ENCODE measurements at regions of chr16 and their contacts with region 1.

Region 1: DNA sequence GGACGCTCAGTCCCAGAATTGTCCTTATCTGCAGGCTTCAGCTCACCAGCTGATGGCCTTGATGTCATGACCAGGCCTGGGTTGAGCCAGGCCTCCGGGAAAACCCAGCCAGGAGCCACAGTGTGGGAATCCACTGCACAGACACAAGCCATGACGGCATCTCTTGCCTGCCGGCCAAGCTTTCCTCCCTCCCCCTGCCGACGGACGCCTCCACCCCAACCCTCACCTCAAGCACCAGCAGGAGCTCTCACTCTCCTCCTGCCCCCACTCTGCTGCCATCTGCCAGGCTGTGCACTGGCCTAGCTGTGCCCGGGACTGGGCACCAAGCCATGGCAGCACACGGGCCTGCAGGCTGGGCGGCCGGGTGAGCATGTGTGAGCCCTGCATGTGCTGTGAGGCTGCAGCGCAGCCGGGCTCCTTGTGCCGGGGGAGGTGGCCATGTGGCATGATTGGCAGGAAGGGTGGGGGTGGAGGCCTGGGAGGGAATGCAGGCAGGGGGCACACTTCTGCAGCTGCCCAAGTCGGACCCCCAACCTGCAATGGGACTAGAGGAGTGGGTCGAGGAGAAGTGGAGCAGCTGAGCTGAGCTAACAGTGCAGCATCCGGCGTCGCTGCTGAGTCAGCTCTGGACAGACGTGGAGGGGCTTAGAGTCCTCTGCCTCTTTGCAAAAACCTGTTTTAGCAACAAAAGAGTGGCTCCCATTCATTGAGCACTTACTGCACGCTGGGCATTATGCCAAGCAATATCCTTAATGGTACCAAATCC is 268.5 kb downstream of the CBLN1 start:
- DNase-seq: peak; percentile 24
- H3K4me3 ChIP-seq: no peak overlapping the region
- H3K27ac ChIP-seq: peak overlapping the region in 3 of 4 donors; percentile 7 to 51 (median 13)
- H3K4me1 ChIP-seq: no peaks in the 10 kb centered on the region
- H3K27me3 ChIP-seq: no peaks in the 10 kb centered on the region
- CTCF ChIP-seq: no peak
- EP300 ChIP-seq: no peak
- POLR2A ChIP-seq: no peak

Region 2: DNA sequence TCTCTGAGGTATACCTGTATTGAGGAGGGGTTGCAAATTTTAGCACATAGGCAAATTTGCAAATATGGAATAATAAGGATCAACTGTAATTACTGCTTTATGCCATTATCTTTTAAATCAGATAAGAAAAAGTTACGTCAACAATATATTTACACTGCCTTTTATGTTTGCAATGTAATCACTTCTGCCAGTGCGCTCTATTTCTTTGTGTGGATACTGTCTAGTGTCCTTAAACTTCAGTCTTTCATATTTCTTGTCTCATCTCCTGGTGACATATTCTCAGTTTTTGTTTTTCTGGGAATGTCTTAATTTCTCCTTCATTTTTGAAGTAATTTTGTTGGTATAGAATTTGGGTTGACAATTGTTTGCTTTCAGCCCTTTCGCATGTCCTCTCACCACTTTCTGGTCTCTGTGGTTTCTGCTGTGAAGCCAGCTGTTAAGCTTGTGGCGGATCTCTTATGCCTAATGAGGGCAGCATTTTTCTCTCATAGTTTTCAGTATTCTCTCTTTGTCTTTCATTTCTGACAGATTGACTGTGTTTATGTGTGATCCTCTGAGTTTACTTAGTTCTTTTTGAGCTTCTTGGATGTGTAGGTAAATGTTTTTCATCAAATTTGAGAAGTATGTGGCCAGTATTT is 728.3 kb before region 1 on chr16:
- in situ Hi-C with region 1: no loop called
- intact Hi-C with region 1: no loop called
- DNase-seq: no peak
- H3K4me3 ChIP-seq: no peak overlapping the region
- H3K27ac ChIP-seq: no peak overlapping the region
- H3K4me1 ChIP-seq: peaks cover 0 to 6% (median 0%) of the 10 kb centered on the region in 4 donors
- H3K27me3 ChIP-seq: no peaks in the 10 kb centered on the region
- CTCF ChIP-seq: no peak
- EP300 ChIP-seq: no peak
- POLR2A ChIP-seq: no peak

Region 3: DNA sequence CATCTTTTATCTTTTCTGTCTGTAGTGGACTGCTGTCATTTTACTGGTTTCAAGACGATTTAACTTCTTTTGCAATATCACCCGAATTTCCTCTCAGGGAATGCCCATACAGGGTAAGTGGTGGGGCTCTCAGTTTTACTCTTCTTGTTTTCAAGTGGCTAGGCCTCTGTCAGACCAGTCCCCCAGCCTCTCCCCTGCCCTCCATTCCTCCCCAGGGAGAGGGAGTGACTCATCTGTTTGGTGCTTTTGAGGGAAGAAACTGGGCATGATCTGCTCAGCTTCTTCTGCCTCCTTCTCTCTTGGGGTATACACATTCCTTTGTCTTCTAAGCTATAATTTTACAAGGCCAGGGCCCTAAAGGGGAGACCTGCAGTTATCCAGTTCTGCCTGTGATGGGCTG is 63.5 kb before region 1 on chr16:
- in situ Hi-C with region 1: no loop called
- intact Hi-C with region 1: loop called (anchors 1 kb)
- DNase-seq: no peak
- H3K4me3 ChIP-seq: no peak overlapping the region
- H3K27ac ChIP-seq: peak overlapping the region in 2 of 4 donors; percentile 9 to 23
- H3K4me1 ChIP-seq: no peaks in the 10 kb centered on the region
- H3K27me3 ChIP-seq: no peaks in the 10 kb centered on the region
- CTCF ChIP-seq: no peak
- EP300 ChIP-seq: no peak
- POLR2A ChIP-seq: no peak

Measured in transverse colon (tissue), 4 donors.